Common myeloid progenitor, CD34-positive (primary cell): ENCODE measurements at regions of chr13 and their contacts with region 1.

Region 1: DNA sequence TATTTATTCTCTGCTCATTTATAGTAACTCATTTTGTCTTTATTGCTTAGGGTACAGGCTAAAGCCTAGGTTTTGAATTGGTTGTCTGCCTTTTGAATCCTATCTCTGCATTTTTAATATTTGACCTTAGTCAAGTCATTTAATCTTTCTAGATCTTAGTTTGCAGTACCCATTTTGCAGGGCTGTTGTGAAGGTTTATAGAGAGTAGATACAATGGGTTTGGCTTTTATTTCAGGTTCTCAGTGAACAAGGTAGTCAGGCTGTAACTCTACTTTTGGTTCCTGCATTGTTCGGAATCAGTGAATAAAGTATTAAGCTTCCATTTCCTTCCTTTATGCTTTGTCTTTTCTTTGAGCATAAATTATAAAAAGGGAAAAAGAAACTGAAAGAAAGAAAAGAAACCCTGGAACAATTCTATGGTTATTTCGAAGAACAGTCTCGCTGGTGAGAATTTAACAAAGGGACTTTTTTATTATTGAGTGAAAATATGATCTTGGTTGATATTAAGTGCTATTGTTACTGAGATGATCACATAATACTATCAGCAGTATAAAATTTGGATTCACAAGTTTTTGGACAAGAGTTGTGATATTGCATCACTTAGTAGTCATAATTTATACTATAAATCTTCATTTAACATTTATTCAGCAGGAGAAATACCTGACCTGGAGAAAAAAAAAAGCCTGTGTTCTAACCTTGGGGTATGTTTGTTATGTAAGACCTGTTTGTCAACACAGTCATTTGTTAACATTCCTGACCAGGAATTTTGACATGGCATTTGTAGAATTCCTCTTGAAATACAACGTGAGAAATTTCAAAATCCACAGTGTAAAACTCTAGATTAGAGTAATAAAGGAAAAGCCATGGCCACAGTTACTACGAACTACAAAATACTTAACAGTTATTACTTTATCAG is 91.3 kb downstream of the ZMYM2 start:
- DNase-seq: peak in 2 of 3 donors; percentile 41 to 43
- H3K4me3 ChIP-seq: peak overlapping the region in 5 of 7 experiments; percentile 24 to 72 (median 40)
- H3K27ac ChIP-seq: peak overlapping the region; percentile 18 to 36
- H3K4me1 ChIP-seq: peaks cover 2 to 14% (median 5%) of the 10 kb centered on the region in 4 experiments
- H3K27me3 ChIP-seq: no peaks in the 10 kb centered on the region

Region 2: GRCh38 chr13:19967621-19968020 is 82.2 kb before region 1 on chr13:
- CTCF ChIA-PET with region 1: no interaction called
- POLR2A ChIA-PET with region 1: no interaction called
- DNase-seq: peak in 2 of 3 donors; percentile 47 to 62
- H3K4me3 ChIP-seq: no peak overlapping the region
- H3K27ac ChIP-seq: no peak overlapping the region
- H3K4me1 ChIP-seq: peaks cover 0 to 5% (median 2%) of the 10 kb centered on the region in 4 experiments
- H3K27me3 ChIP-seq: no peaks in the 10 kb centered on the region

Region 3: DNA sequence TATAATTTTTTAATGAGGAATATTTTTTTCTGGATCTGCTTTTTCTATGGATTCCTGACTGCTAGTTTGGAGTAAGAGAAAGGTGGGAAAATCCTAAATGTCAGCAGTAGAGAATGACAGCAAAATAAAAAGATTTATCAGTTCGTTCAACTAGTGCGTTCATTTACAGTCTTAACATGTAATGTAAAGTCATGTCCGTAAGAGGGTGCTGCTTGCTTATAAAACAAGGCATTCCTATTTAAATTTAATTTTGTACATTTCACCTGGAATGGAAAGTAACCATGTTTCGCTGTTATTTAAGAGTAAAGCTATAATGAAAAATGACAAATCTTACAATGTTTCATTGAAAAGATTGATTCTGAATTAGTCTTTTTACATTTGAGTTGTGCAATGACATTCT is 14.7 kb before region 1 on chr13:
- CTCF ChIA-PET with region 1: interaction called, 10 read pairs
- POLR2A ChIA-PET with region 1: no interaction called
- DNase-seq: no peak
- H3K4me3 ChIP-seq: no peak overlapping the region
- H3K27ac ChIP-seq: no peak overlapping the region
- H3K4me1 ChIP-seq: peaks cover 0 to 1% (median 0%) of the 10 kb centered on the region in 4 experiments
- H3K27me3 ChIP-seq: no peaks in the 10 kb centered on the region

Region 4: GRCh38 chr13:20064128-20064527 is 14.3 kb after region 1 on chr13:
- CTCF ChIA-PET with region 1: no interaction called
- POLR2A ChIA-PET with region 1: no interaction called
- DNase-seq: peak in 2 of 3 donors; percentile 3 to 14
- H3K4me3 ChIP-seq: no peak overlapping the region
- H3K27ac ChIP-seq: no peak overlapping the region
- H3K4me1 ChIP-seq: no peaks in the 10 kb centered on the region
- H3K27me3 ChIP-seq: no peaks in the 10 kb centered on the region

Region 5: GRCh38 chr13:20219577-20219976 is 169.8 kb after region 1 on chr13:
- CTCF ChIA-PET with region 1: no interaction called
- POLR2A ChIA-PET with region 1: no interaction called
- DNase-seq: peak in 1 of 3 donors; percentile 11
- H3K4me3 ChIP-seq: no peak overlapping the region
- H3K27ac ChIP-seq: no peak overlapping the region
- H3K4me1 ChIP-seq: peaks cover 0 to 3% (median 1%) of the 10 kb centered on the region in 4 experiments
- H3K27me3 ChIP-seq: peaks cover 0 to 16% (median 3%) of the 10 kb centered on the region in 5 experiments

Region 6: DNA sequence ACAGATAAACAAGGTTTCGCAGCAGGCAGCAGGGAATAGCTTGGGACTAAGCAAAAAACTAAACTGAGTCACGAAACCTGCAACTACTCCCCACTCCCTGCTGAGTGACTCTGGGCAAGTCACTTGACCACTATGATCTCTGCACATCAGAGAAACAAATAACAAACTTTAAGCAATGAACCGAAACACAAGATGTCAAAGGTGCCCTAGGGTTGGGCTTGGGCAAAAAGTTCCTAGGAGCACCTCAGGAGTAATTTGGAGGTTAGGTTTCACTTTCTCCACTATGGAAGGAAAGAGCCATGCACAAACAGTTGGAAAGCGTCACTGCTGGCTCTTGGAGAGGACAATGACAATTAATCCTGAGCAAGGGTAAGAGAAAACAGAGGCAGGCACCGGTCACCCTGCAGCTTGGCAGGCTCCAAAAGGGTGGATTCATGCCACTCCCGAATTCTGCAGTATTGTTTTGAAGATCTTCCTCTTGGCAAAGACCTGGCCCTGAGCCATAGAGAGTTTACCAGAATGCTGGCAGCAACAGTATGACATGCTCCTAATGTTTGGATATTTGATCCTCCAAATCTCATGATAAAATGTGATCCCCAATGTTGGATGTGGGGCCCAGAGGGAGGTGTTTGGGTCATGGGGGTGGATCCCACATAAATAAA is 415.5 kb after region 1 on chr13:
- CTCF ChIA-PET with region 1: no interaction called
- POLR2A ChIA-PET with region 1: no interaction called
- DNase-seq: no peak
- H3K4me3 ChIP-seq: no peak overlapping the region
- H3K27ac ChIP-seq: no peak overlapping the region
- H3K4me1 ChIP-seq: peaks cover 0 to 18% (median 10%) of the 10 kb centered on the region in 4 experiments
- H3K27me3 ChIP-seq: no peaks in the 10 kb centered on the region